ENCODE measurements at regions of chr3 and their contacts with region 1.

Region 1: DNA sequence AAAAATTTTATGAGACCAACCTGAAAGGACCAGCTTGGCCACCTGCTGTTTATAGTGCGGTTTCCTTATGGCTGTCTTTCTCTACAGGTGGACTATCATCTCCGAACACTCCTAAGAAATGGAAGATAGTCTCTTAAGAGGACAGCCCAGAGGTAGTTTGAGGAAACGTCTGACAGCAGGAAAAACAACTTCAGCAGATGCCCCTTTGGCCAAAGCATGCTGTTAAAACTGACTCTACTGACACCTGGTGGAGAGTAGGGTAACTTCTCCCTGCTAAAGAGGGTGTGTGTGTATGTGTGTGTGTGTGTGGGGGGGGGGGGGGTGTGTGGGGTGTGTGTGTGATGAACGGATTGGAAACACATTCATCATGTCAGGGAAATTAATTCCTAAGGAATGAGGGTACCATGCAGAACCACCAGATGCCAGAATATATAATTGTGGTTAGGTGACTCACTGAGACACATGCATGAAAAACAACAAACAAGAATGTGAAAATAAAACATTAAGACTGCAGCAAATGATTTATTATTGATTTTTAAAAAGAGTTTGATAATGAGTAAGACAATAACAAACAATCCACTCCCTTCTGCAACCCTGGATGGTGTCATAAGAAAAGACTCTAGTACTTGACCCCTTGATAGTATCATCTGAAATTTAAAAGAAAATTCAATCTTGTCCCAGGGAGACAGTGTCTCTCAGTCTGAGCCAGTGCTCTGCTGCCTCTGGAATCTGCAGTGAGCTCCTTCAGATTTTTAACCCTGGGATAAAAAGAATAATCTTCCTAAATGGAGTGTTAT is 256.5 kb downstream of the THRB start:
- DNase-seq: peak; percentile 76
- H3K4me3 ChIP-seq: no peak overlapping the region
- H3K27ac ChIP-seq: no peak overlapping the region
- H3K27me3 ChIP-seq: peaks cover 9% of the 10 kb centered on the region
- CTCF ChIP-seq: peak; percentile 87

Region 2: DNA sequence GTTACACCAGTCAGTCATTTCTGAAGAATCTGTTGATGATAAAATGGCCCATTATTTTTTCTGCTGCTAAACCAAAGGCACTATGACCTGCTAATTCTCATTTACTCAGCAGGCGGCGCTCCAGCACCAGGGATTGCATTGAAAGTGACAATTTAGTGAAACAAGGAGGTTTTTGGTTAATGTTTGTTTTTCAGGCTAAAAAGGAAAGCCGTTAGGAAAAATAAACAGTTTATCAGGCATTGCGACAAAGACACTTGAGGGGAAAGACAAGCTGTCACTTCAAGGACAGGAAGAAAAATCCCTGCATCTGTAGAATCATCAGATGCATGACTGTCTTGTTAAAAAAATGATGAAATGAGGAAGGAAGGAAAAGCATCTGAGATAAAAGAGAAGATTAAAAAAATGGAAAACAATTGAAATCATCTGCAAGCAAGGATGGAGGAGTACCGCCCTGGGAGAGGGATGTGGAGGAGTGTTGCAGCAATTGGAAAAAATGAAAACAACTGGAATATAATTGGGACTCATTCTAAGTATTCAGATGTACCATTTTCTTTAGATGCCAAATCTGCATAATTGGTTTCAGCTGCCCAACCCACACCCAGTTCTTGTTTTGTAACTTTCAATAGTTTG is 239.0 kb before region 1 on chr3:
- CTCF ChIA-PET with region 1: interaction called, 39 read pairs
- POLR2A ChIA-PET with region 1: no interaction called
- DNase-seq: peak; percentile 18
- H3K4me3 ChIP-seq: no peak overlapping the region
- H3K27ac ChIP-seq: no peak overlapping the region
- H3K27me3 ChIP-seq: no peaks in the 10 kb centered on the region
- CTCF ChIP-seq: peak; percentile 97

Region 3: GRCh38 chr3:24088782-24089181 is 149.4 kb before region 1 on chr3:
- CTCF ChIA-PET with region 1: interaction called, 11 read pairs
- POLR2A ChIA-PET with region 1: no interaction called
- DNase-seq: no peak
- H3K4me3 ChIP-seq: no peak overlapping the region
- H3K27ac ChIP-seq: no peak overlapping the region
- H3K27me3 ChIP-seq: peaks cover 3% of the 10 kb centered on the region
- CTCF ChIP-seq: peak; percentile 52

Region 4: DNA sequence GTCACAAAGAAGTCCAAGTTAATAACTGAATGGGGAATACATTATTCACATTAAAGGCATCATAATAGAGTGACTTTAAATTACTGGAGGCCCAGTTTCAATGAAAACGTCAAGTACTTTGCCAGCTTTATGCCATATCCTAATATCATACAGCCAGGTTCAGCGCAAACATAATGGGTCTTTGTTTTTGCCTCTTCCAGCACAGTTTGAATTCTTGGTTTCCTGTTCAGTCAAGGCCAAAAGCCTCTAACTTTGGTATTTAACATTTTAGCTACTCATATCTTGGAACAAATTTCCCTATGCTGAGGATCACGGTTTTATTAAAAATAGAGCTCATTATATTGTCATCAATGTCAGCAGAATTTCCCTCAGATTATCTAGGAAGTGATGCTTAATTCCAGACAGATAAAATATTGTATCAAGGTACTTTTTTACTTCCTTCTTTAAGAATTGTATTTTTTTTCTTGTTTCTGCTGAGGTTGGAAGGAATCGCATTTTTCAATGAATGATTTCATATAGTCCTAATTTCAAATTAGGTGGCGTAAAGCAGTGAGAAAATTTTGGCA is 12.7 kb before region 1 on chr3:
- CTCF ChIA-PET with region 1: interaction called, 16 read pairs
- POLR2A ChIA-PET with region 1: no interaction called
- DNase-seq: no peak
- H3K4me3 ChIP-seq: no peak overlapping the region
- H3K27ac ChIP-seq: no peak overlapping the region
- H3K27me3 ChIP-seq: peaks cover 5% of the 10 kb centered on the region
- CTCF ChIP-seq: no peak

Region 5: DNA sequence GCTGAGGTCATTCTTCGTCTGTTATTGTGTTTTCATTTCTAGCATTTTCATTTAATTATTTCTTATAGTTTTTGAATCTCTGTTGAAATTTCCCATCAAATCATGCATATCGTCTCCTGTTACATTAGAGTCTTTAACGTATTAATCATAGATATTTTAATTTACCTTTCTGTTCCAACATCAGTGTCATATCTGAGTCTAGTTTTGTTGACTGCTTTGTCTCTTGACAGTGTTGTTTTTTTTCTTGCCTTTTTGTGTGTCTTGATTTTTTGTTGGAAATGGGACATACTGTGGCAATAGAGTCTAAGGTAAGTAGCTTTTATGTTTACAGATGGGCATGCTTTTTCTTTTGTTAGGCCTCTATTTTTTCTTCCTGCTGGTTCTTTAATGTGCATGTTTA is 543.3 kb after region 1 on chr3:
- CTCF ChIA-PET with region 1: no interaction called
- POLR2A ChIA-PET with region 1: no interaction called
- DNase-seq: no peak
- H3K4me3 ChIP-seq: no peak overlapping the region
- H3K27ac ChIP-seq: no peak overlapping the region
- H3K27me3 ChIP-seq: no peaks in the 10 kb centered on the region
- CTCF ChIP-seq: no peak

Measured in AG04450 (cell line).